Heart left ventricle (tissue), 16 donors: ENCODE measurements at regions of chr1 and their contacts with region 1.

Region 1: GRCh38 chr1:12619792-12620487 is 1.9 kb upstream of the DHRS3 start:
- DNase-seq: peak; percentile 88 to 91 (median 89)
- ATAC-seq: peak; percentile 43 to 62 (median 54)
- H3K4me3 ChIP-seq: peak overlapping the region in 11 of 12 donors; percentile 63 to 97 (median 77)
- H3K27ac ChIP-seq: peak overlapping the region; percentile 91 to 98 (median 95)
- H3K4me1 ChIP-seq: peaks cover 0 to 60% (median 43%) of the 10 kb centered on the region in 12 donors
- H3K27me3 ChIP-seq: no peaks in the 10 kb centered on the region
- CTCF ChIP-seq: peak; percentile 91 to 99 (median 94)
- POLR2A ChIP-seq: no peak

Region 2: GRCh38 chr1:11072216-11072917 is 1547.6 kb before region 1 on chr1:
- intact Hi-C with region 1: no loop called
- DNase-seq: no peak
- ATAC-seq: no peak
- H3K4me3 ChIP-seq: no peak overlapping the region
- H3K27ac ChIP-seq: no peak overlapping the region
- H3K4me1 ChIP-seq: no peaks in the 10 kb centered on the region
- H3K27me3 ChIP-seq: no peaks in the 10 kb centered on the region
- CTCF ChIP-seq: no peak
- POLR2A ChIP-seq: no peak

Region 3: GRCh38 chr1:12314333-12314903 is 305.5 kb before region 1 on chr1:
- intact Hi-C with region 1: loop called (anchors 5 to 10 kb)
- DNase-seq: no peak
- ATAC-seq: peak in 2 of 4 donors; percentile 19 to 56
- H3K4me3 ChIP-seq: no peak overlapping the region
- H3K27ac ChIP-seq: peak overlapping the region in 2 of 12 donors; percentile 11 to 67
- H3K4me1 ChIP-seq: peaks cover 0 to 20% (median 10%) of the 10 kb centered on the region in 12 donors
- H3K27me3 ChIP-seq: no peaks in the 10 kb centered on the region
- CTCF ChIP-seq: peak; percentile 10 to 70 (median 54)
- POLR2A ChIP-seq: no peak

Region 4: GRCh38 chr1:12407050-12407961 is 212.6 kb before region 1 on chr1:
- intact Hi-C with region 1: loop called in 9 of 10 experiments (anchors 1 to 5 kb)
- DNase-seq: peak in 2 of 5 donors; percentile 27 to 32
- ATAC-seq: peak; percentile 62 to 82 (median 70)
- H3K4me3 ChIP-seq: no peak overlapping the region
- H3K27ac ChIP-seq: peak overlapping the region; percentile 31 to 75 (median 60)
- H3K4me1 ChIP-seq: peaks cover 6 to 53% (median 36%) of the 10 kb centered on the region in 12 donors
- H3K27me3 ChIP-seq: no peaks in the 10 kb centered on the region
- CTCF ChIP-seq: peak; percentile 7 to 69 (median 50)
- POLR2A ChIP-seq: no peak

Region 5: DNA sequence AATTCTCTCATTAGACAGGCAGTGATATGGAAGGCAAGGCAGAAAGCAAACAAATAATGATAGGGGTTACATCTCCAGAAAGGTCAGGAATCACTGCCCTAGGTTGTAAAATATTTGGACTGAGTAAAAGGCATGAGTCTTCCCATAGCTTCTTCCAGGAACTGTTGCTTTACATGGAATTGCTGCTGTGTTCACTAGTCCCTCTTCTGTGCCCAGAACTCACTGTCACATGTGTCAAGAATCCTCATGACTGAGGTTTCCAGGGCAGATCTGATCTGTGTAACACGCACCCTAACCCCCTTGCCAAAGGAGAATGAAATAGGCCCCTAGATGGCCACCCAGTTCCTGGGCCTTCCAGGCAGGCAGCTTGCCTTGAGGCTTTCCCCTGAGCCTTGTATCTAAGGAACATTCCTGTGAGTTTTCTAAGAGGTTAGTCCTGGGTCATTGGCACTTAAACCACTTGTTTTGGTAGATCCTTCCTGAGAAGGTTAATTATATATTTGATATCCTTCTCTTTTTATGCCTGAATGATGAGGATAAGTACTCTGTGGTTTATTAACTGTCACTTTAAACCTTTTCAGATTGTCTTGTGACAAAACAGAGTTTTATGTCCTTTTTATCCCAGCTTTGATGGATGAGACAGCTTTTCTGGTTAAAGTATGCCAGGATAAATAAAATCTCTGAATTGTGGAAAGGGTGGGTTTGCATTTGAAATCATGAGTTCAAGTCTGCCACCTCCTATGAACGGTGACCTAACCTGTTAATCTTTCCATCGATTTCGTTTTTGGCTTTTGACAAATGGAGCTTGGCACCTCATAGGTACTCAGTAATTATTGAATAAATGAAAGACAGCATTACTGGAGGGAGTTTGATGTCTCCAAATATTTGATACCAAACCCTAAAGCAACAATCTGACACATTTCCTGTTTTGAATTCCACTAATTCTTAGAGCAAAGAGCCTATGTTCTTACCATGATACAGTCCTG is 165.2 kb before region 1 on chr1:
- intact Hi-C with region 1: loop called in 1 of 10 experiments (anchors 5 kb)
- DNase-seq: no peak
- ATAC-seq: peak; percentile 15 to 41 (median 30)
- H3K4me3 ChIP-seq: no peak overlapping the region
- H3K27ac ChIP-seq: peak overlapping the region; percentile 38 to 82 (median 71)
- H3K4me1 ChIP-seq: peaks cover 19 to 99% (median 76%) of the 10 kb centered on the region in 12 donors
- H3K27me3 ChIP-seq: no peaks in the 10 kb centered on the region
- CTCF ChIP-seq: no peak
- POLR2A ChIP-seq: no peak

Region 6: DNA sequence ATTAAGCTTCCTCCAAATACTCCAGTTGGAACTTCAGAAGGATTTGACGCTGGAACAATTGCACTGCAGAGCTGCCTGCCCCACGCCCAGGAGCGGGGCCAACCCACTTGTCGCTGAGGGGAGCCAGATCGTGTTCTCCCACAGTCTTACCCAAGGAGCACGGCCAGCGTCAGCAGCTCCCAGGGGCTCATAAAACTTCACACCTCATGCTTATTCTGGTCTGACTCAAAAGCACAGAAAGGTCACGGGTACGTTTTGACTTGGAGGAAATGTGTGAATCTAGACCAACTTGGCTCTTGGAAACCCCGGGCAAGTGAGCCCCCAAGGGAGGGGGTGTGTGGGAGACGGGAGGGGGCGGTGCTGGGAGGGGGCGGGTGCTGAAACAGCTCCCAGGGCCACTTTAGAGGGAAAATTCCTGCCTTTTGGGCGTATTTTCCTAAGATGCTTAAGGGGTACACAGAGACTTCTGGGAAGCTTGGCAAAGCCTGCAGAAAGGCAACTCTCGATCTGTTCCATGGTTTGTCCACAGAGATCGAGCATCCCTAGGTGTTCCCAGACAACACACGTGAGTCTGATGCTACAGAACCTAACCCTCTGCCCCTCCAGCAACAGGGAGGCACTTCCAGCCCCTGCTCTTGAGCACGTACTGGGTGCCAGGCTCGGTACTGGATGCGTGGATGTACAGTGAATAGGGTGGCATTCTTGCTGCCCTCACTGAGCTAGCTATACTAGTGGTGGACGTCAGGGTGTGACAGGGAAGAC is 100.8 kb before region 1 on chr1:
- intact Hi-C with region 1: loop called in 3 of 10 experiments (anchors 5 to 10 kb)
- DNase-seq: peak; percentile 56 to 85 (median 80)
- ATAC-seq: peak; percentile 72 to 96 (median 84)
- H3K4me3 ChIP-seq: peak overlapping the region in 1 of 12 donors; percentile 7
- H3K27ac ChIP-seq: peak overlapping the region in 3 of 12 donors; percentile 13 to 81 (median 15)
- H3K4me1 ChIP-seq: peaks cover 0 to 22% (median 13%) of the 10 kb centered on the region in 12 donors
- H3K27me3 ChIP-seq: no peaks in the 10 kb centered on the region
- CTCF ChIP-seq: no peak
- POLR2A ChIP-seq: no peak

Region 7: GRCh38 chr1:12549460-12550349 is 70.2 kb before region 1 on chr1:
- intact Hi-C with region 1: loop called in 6 of 10 experiments (anchors 5 to 10 kb)
- DNase-seq: peak; percentile 54 to 85 (median 69)
- ATAC-seq: peak; percentile 4 to 41 (median 32)
- H3K4me3 ChIP-seq: no peak overlapping the region
- H3K27ac ChIP-seq: peak overlapping the region in 11 of 12 donors; percentile 45 to 91 (median 73)
- H3K4me1 ChIP-seq: peaks cover 13 to 67% (median 37%) of the 10 kb centered on the region in 12 donors
- H3K27me3 ChIP-seq: no peaks in the 10 kb centered on the region
- CTCF ChIP-seq: no peak
- POLR2A ChIP-seq: no peak

Region 8: DNA sequence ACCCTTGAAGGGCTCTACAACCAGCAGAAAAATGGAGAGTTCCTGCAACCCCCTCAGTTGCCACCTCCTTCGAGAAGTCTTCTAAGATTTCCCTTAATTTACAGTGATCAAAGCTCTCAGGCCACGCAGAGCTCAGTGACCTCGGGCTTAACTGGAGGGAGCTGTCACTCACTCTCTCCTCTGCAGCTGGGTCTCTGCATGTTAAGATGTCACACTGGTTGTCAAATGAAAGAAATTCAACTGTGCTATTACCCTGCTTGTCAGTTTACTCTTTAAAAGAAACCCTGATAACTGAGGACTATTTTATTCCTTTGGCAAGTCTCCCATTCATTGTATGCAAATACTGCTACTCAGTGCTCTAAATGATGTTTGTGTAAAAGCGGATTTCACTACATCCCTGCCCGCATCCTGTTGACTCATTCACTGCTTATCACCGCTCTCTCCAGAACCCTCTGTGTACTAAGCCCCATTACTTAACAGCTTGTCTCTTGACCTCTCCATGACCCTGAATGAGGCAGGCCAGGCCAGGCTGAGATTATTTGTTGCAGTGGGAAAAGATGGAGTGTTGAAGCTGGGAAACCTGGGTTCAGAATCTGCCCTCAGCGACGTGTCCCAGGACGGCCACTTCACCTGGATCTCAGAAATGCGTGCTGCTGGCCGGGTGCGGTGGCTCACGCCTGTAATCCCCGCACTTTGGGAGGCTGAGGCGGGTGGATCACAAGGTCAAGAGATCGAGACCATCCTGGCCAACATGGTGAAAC is 15.6 kb before region 1 on chr1:
- intact Hi-C with region 1: loop called in 3 of 10 experiments (anchors 2 kb)
- DNase-seq: peak in 4 of 5 donors; percentile 60 to 76 (median 69)
- ATAC-seq: peak; percentile 81 to 91 (median 88)
- H3K4me3 ChIP-seq: no peak overlapping the region
- H3K27ac ChIP-seq: peak overlapping the region; percentile 22 to 93 (median 78)
- H3K4me1 ChIP-seq: peaks cover 24 to 72% (median 60%) of the 10 kb centered on the region in 12 donors
- H3K27me3 ChIP-seq: no peaks in the 10 kb centered on the region
- CTCF ChIP-seq: no peak
- POLR2A ChIP-seq: no peak